ENCODE measurements at regions of chr5 and their contacts with region 1.

Region 1: GRCh38 chr5:16616536-16617273 is at the start of gene RETREG1:
- DNase-seq: peak; percentile 94
- ATAC-seq: peak; percentile 79
- H3K4me3 Mint-ChIP-seq: no peak within 1 kb of the TSS
- H3K27ac Mint-ChIP-seq: peak within 1 kb of the TSS; percentile 96
- H3K4me1 Mint-ChIP-seq: peaks cover 39% of the 10 kb centered on the region
- H3K27me3 Mint-ChIP-seq: no peaks in the 10 kb centered on the region
- total RNA-seq, gene RETREG1: 50.9 to 59.8 TPM

Region 2: DNA sequence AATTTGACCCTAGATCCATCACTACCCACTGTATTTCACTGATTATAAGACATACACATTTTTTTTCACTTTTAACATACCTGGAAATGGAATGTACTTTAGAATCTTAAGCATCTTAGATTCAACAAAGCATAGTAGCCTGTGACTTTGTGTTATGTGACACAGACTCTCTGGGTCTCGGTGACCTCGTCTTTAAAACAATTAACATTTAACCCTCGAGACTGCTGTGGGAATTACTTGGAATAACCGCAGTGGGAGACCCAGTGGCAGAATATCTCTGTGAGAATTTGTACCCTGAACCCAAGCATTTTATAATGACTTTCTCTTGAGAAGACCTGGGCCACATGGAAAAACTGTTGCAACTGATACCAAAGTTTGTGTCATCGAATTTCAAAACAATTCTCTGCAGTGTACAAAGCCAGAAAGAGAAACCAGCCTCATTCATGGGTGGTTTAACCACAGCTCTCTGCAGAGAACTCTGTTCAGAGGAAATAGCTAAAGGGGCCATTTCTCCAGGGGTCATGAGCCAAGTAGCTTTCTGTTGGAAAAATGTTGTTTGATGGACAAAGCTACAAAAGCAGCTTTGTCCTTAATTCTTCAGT is 10.1 kb after region 1 on chr5:
- POLR2A ChIA-PET with region 1: interaction called, 242 read pairs
- DNase-seq: no peak
- ATAC-seq: peak; percentile 81
- H3K4me3 Mint-ChIP-seq: peak overlapping the region; percentile 81
- H3K27ac Mint-ChIP-seq: peak overlapping the region; percentile 99
- H3K4me1 Mint-ChIP-seq: peaks cover 39% of the 10 kb centered on the region
- H3K27me3 Mint-ChIP-seq: no peaks in the 10 kb centered on the region

Region 3: GRCh38 chr5:16644301-16644889 is 27.7 kb after region 1 on chr5:
- POLR2A ChIA-PET with region 1: interaction called, 12 read pairs
- DNase-seq: no peak
- ATAC-seq: peak; percentile 61
- H3K4me3 Mint-ChIP-seq: peak overlapping the region; percentile 62
- H3K27ac Mint-ChIP-seq: peak overlapping the region; percentile 72
- H3K4me1 Mint-ChIP-seq: peaks cover 10% of the 10 kb centered on the region
- H3K27me3 Mint-ChIP-seq: no peaks in the 10 kb centered on the region

Region 4: GRCh38 chr5:16666883-16667398 is 50.2 kb after region 1 on chr5:
- POLR2A ChIA-PET with region 1: interaction called, 15 read pairs
- DNase-seq: no peak
- ATAC-seq: no peak
- H3K4me3 Mint-ChIP-seq: no peak overlapping the region
- H3K27ac Mint-ChIP-seq: no peak overlapping the region
- H3K4me1 Mint-ChIP-seq: peaks cover 2% of the 10 kb centered on the region
- H3K27me3 Mint-ChIP-seq: no peaks in the 10 kb centered on the region

Region 5: DNA sequence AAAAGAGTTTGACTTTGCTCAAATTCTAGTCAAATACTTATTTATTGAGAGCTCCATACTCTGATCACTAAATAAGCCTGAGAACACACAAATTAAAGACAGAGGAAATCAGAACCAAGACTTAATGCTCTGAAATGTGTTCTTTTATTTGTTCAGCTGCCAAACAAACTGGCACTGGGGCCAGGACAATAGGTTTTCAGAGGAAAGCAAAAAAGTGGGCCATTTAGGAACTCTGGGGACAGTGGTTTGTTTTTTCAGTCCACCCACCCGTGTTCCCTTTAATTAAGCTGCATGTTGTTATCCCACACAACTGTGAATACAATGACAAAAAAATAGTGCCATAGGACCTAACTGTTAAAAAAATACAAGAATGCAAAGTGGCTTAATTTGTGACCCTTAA is 95.5 kb after region 1 on chr5:
- POLR2A ChIA-PET with region 1: no interaction called
- DNase-seq: no peak
- ATAC-seq: no peak
- H3K4me3 Mint-ChIP-seq: no peak overlapping the region
- H3K27ac Mint-ChIP-seq: no peak overlapping the region
- H3K4me1 Mint-ChIP-seq: no peaks in the 10 kb centered on the region
- H3K27me3 Mint-ChIP-seq: peaks cover 15% of the 10 kb centered on the region

Region 6: GRCh38 chr5:16759147-16759773 is 142.6 kb after region 1 on chr5:
- POLR2A ChIA-PET with region 1: interaction called, 13 read pairs
- DNase-seq: peak; percentile 36
- ATAC-seq: peak; percentile 96
- H3K4me3 Mint-ChIP-seq: peak overlapping the region; percentile 17
- H3K27ac Mint-ChIP-seq: peak overlapping the region; percentile 60
- H3K4me1 Mint-ChIP-seq: peaks cover 6% of the 10 kb centered on the region
- H3K27me3 Mint-ChIP-seq: no peaks in the 10 kb centered on the region